ENCODE measurements at regions of chr3 and their contacts with region 1.

Region 1: GRCh38 chr3:146308682-146309081 is 57.8 kb upstream of the PLSCR4 start:
- DNase-seq: peak in 1 of 2 donors; percentile 54
- ATAC-seq: peak; percentile 47 to 92 (median 88)
- H3K4me3 ChIP-seq: no peak overlapping the region
- H3K27ac ChIP-seq: peak overlapping the region in 8 of 10 donors; percentile 28 to 55 (median 40)
- H3K4me1 ChIP-seq: peaks cover 0 to 31% (median 10%) of the 10 kb centered on the region in 9 donors
- H3K27me3 ChIP-seq: no peaks in the 10 kb centered on the region
- CTCF ChIP-seq: no peak

Region 2: DNA sequence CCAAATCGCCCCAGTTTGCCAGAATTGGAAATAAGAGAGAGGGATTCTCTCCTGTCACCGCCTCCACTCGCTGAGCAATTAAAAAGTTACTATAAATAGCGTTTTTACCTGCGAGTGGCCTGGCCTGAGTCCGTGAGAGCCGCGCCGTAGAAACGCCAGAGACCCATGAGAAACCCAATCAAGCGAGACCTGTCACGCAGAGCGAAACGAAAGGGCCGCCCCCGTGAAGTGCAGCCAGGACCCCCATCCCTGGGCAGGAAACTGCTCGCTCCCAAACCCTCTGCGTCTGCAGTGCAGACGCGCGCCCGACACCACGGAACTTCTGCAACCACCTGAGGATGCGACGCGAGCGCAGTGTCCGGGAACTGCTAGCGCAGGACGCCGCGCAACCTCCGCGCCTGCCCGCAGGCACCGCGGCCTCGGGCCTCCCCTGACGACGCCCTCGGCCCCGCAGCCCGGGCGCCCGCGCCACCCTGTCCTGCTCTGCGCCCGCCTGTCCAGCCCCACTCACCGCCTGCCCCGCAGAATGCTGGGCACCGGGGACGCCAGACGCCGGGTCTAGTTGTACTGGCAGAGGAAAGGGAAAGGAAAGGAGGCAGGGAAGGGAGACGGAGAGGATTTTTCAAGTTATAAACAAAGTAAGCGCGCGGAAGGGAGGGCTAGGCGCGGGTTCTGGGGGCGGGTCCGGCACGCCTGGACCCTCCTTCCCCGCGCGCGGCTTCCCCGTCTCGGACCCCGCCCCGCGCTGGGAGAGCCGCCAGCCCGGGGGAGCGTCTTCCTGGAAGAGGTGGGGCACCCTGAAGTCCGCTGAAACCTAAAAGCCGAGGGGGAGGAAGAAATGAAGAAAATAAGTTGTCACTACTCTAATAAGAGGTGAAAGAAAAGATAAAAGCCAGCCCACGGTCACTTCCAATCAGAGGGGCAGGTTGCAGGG is 58.0 kb before region 1 on chr3 and contains the start of gene PLSCR4:
- intact Hi-C with region 1: loop called in 1 of 10 experiments (anchors 10 kb)
- DNase-seq: peak; percentile 86 to 87
- ATAC-seq: peak; percentile 95 to 98 (median 96)
- H3K4me3 ChIP-seq: peak within 1 kb of the TSS; percentile 54 to 84 (median 68)
- H3K27ac ChIP-seq: peak within 1 kb of the TSS; percentile 83 to 92 (median 90)
- H3K4me1 ChIP-seq: peaks cover 0 to 38% (median 18%) of the 10 kb centered on the region in 9 donors
- H3K27me3 ChIP-seq: peaks cover 0 to 20% (median 0%) of the 10 kb centered on the region in 7 donors
- CTCF ChIP-seq: no peak
- total RNA-seq, gene PLSCR4: 8.1 to 16.4 (median 12.0) TPM

Region 3: DNA sequence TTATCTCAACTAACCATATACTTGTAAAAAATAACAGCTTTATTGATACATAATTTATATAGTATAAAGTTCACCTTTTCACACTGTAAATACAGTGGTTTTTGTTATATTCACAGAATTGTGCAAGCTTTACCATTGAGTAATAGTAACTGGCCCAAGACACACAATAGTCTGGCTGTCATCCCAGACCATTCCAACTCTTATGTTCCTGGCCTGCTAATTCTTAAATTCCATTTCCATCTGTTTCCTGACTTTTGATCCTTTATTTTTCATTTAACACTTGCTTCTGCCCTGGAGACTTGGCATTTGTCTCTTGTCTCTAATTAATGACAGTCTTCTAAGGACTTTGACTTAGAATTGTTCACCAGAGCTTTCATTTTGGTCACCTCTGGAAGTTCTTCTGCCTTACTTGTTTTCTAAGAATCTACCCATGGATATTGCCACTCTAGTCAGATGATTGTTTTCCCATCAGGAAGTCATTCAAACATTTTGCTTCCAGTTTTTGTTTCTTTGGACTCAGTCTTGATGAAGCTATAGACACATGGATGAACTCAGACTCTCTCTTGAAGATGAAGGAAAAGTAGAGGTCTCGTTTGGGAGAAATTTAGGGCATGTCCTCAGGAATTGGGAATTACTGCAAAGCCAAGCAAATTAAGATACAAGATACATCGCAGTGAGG is 30.6 kb before region 1 on chr3:
- intact Hi-C with region 1: loop called in 1 of 10 experiments (anchors 1 kb)
- DNase-seq: peak in 1 of 2 donors; percentile 50
- ATAC-seq: peak in 7 of 8 donors; percentile 60 to 83 (median 79)
- H3K4me3 ChIP-seq: no peak overlapping the region
- H3K27ac ChIP-seq: peak overlapping the region in 4 of 10 donors; percentile 7 to 38 (median 30)
- H3K4me1 ChIP-seq: peaks cover 0 to 35% (median 14%) of the 10 kb centered on the region in 9 donors
- H3K27me3 ChIP-seq: peaks cover 0 to 4% (median 0%) of the 10 kb centered on the region in 7 donors
- CTCF ChIP-seq: no peak

Measured in heart right ventricle (tissue), 16 donors.